ENCODE measurements at regions of chr3 and their contacts with region 1.

Region 1: GRCh38 chr3:52070724-52071621 is 14.6 kb upstream of the DUSP7 start:
- DNase-seq: no peak
- H3K4me3 Mint-ChIP-seq: no peak overlapping the region
- H3K27ac Mint-ChIP-seq: no peak overlapping the region
- H3K4me1 Mint-ChIP-seq: no peaks in the 10 kb centered on the region
- H3K27me3 Mint-ChIP-seq: no peaks in the 10 kb centered on the region

Region 2: DNA sequence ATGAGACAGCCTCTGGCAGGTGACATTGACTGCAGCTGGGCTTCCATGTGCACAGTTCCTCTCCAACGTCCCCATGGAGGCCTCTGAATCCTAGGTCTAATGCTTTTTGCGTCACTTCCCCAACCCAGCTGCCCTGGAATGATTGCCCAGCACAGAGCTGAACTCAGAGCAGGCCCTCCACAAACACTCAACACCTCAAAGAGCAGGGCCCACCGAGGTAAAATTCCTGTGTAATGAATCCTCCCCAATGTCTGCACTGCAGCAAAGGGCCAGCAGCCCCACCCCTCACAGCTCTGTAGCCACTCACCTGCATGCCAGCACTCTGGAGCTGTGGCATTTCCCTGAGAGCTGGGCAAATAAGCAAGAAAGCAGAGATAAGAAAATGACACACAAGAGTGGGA is 28.0 kb after region 1 on chr3:
- intact Hi-C with region 1: loop called (anchors 1 kb)
- DNase-seq: no peak
- H3K4me3 Mint-ChIP-seq: no peak overlapping the region
- H3K27ac Mint-ChIP-seq: no peak overlapping the region
- H3K4me1 Mint-ChIP-seq: peaks cover 6% of the 10 kb centered on the region
- H3K27me3 Mint-ChIP-seq: no peaks in the 10 kb centered on the region